Head of caudate nucleus (tissue), 42 donors: ENCODE measurements at regions of chr13 and their contacts with region 1.

Region 1: DNA sequence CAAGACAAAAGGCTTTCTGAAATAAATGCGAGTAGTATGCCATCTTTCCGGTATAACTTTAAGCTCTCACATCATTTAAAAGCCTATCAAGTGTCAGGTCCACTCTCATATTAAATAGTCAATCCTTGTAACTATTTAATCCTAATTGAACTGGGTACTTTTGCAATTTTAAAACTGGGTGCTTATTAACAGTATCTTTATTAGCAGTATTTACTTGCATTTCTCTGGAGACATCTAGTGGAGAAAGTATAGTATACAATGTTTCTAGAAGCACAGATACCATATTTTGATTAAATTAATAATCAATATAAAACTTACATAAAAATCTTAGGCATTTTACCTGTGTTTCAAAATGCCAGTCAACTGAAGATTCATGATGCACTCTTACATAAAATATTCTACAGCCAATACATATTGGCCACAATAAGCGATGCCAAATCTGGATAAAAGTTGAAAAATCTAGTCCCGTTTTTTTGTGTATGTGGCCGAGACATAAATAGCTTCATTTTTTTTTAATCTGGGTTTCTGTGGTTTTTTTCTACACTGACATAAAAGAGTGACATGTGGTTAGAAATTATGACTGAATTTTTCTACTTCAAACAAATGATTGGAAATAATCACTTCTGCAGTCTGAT is 4.3 kb upstream of the POSTN start:
- DNase-seq: no peak

Region 2: DNA sequence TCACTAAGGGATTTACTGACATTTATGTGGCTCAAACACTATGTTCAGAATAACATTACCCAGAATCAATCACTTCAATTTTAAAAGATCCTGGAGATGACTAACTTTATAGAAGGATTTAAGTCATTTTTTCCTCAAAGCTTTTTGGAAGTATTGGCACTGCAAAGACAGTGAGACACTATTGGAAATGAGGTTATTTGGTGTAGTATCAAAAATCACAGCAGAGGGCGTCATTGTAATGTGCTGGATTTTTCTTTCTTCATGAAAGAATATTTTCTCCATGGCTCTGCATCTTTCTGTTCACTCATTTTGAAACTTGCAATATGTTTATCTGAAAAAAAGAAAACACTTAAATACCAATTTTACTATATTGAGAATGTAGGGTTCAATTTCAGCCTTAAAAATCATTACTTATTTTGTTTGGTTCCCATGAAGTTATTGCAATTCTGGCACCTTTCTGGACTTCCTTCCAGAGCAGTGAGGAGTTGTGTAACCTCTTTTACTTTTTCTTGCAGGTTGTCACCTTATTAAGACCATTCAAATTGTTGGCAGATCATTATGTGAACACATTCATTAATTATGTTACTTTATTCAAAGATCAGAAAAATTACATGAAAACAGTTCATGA is 493.7 kb before region 1 on chr13:
- intact Hi-C with region 1: loop called (anchors 5 kb)
- DNase-seq: peak in 13 of 42 donors; percentile 20 to 74 (median 29)